ENCODE measurements at regions of chr17 and their contacts with region 1.

Region 1: DNA sequence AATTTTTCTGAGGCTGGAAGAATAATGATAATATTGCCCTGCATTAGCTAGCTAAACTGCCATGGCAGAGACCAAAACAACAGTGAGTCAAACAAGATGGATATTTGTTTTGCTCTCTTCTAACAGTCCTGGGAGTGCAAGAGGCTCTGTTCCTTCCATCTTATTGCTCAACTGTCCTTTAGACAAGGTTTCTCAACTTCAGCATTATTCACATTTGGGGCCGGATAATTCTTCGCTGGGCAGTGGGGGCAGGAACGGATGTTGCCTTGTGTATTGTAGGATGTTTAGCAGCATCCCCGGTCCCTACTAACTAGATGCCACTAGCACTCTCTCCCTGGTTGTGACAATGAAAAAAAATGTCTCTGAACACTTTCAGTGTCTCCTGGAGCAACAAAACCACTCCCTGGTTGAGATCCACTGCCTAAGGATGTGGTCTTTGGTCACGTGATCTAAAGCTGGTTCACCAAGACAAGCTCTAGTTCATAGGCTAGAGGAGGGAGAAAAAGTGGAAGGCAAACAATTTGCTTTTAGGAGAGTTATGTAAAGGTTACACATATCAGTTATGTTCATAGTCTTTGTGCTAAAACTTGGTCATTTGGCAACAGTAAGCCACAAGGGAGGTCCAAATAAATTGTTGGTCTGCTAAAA is 144.4 kb downstream of the PCTP start:
- DNase-seq: no peak
- H3K4me3 ChIP-seq: no peak overlapping the region
- H3K27ac ChIP-seq: no peak overlapping the region
- H3K4me1 ChIP-seq: no peaks in the 10 kb centered on the region
- H3K27me3 ChIP-seq: no peaks in the 10 kb centered on the region
- CTCF ChIP-seq: no peak
- EP300 ChIP-seq: no peak
- POLR2A ChIP-seq: no peak

Region 2: DNA sequence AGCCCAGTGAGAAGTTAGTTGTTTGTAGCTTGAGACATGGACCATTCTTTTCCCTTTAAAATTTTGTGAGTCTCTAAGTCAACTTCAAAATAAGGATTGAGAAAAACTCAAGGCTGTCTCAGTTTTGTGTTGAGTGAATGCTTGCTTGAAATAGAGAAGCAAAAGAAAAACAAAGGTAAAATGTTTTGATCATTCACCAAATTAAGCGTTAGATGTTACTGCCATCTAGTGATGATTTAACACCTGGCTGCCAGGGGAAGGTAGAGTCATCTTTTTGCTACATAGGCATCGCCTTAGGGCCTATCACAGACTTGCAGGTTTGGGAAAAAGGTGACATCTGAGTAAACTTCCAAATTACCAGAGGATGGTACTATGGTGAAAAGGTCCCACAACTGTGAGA is 70.0 kb before region 1 on chr17:
- intact Hi-C with region 1: loop called in 1 of 4 experiments (anchors 10 kb)
- DNase-seq: no peak
- H3K4me3 ChIP-seq: no peak overlapping the region
- H3K27ac ChIP-seq: no peak overlapping the region
- H3K4me1 ChIP-seq: no peaks in the 10 kb centered on the region
- H3K27me3 ChIP-seq: no peaks in the 10 kb centered on the region
- CTCF ChIP-seq: no peak
- EP300 ChIP-seq: no peak
- POLR2A ChIP-seq: no peak

Measured in ovary (tissue), 10 donors.